Activated CD4-positive, alpha-beta memory T cell treated with anti-CD3 and anti-CD28 coated beads for 36 hours (primary cell): ENCODE measurements at regions of chr11 and their contacts with region 1.

Region 1: DNA sequence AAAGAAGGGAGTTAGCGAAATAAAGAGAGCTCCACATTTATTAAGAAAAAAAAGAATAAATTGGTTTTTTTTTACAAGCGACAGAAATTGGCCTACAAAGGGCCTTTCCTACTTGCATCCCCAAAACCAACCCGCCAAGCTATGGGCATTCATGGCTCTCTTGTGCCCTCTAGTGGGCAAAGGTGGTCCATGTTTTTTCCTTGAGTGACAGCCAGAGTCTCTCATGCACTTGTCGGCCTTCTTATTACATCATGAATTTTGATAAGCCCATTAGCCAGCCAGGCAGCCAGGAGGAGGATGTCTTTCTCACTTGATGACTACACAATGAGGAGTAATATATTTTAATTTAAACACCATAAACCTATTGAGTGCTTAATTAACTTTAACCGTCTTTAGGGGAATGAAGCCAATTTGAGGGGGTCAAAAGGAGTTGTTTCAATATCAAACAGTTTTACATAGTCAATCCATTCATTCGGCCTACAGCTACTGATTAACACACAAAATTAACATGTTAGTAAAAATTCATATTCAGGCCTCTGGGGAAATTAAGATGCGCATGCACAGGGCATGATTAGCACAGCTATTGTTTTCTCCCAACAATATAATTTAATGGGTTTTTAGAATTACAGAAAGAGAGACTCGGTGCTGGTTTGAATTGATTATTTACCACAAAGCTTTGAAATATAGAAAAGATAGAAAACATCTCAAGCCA is 85.5 kb downstream of the RCN1 start:
- DNase-seq: peak; percentile 84
- H3K4me3 Mint-ChIP-seq: no peak overlapping the region
- H3K27ac Mint-ChIP-seq: no peak overlapping the region
- H3K4me1 Mint-ChIP-seq: peaks cover 4% of the 10 kb centered on the region
- H3K27me3 Mint-ChIP-seq: peaks cover 8% of the 10 kb centered on the region

Region 2: GRCh38 chr11:31107062-31107461 is 1069.3 kb before region 1 on chr11:
- CTCF ChIA-PET with region 1: interaction called, 5 read pairs
- POLR2A ChIA-PET with region 1: no interaction called
- intact Hi-C with region 1: loop called (anchors 1 kb)
- DNase-seq: peak; percentile 66
- H3K4me3 Mint-ChIP-seq: no peak overlapping the region
- H3K27ac Mint-ChIP-seq: no peak overlapping the region
- H3K4me1 Mint-ChIP-seq: no peaks in the 10 kb centered on the region
- H3K27me3 Mint-ChIP-seq: no peaks in the 10 kb centered on the region

Region 3: DNA sequence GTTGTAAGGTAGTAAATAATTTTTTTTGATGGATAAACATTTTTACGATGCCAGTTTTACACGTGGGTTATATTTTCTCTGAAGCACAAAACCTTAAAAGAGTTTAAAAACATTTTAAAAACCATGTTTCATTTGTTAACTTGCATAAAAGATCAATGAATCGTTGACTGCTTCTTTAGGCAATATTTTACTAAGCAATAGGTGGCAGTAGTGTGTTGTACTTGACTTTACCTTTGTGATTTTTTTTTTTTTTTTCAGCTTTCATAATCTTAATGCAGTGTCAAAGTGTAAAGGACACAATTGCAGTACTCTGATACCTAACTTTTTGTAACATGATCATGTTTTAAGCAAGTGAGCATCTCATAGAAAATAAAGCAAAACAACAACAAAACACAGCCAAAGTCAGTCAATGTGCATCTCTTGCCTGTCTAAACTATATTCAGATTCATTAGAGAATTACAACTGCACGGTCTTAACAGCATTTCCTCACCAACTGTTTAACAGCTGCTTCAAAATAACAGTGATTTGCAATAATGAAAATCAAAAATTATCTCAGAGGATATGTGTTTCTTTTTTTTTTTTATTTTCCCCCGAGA is 779.0 kb before region 1 on chr11:
- CTCF ChIA-PET with region 1: interaction called, 4 read pairs
- POLR2A ChIA-PET with region 1: no interaction called
- intact Hi-C with region 1: loop called (anchors 5 kb)
- DNase-seq: no peak
- H3K4me3 Mint-ChIP-seq: no peak overlapping the region
- H3K27ac Mint-ChIP-seq: no peak overlapping the region
- H3K4me1 Mint-ChIP-seq: no peaks in the 10 kb centered on the region
- H3K27me3 Mint-ChIP-seq: no peaks in the 10 kb centered on the region

Region 4: DNA sequence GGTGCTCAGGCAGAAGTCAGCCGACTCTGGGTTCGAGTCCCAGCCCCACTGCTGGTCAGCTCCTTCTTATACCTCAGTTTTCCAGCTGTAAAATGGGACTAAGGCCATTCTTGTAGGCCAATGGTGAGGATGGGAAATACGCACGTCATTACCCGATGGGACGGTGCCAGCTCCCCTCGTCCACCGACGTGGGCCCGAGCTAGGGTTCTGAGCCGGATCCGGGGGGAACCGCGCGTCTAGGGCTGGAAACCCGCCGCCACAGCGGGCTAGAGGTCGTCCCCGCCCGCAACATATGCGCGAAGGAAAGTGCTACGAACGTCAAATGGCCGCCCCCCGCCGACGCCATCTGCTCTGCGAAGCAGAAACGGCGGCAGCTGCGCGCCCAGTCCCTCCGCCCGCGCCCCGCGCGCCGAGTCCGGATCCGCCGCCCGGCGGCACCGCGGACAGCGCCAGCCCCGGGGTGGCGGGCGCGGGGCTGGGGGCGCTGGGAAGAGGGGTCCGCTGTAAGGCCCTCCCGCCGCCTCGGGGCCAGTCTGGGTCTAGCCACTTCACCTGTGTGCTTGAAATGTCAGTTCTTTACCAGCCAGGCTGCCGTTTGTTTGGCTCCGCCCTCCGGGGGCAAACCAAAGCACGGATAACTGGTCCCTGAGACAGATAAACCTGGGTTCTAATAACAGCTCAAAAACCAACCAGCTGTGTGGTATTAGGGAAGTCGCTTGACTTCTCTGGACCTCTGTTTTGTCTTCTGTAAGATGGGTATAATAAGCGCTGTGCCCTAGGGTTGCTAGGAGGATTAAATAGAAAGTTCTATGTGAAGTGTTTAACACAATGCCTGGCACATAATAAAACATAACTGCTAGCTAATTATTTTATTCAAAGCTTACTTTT is 189.0 kb before region 1 on chr11:
- CTCF ChIA-PET with region 1: no interaction called
- POLR2A ChIA-PET with region 1: no interaction called
- intact Hi-C with region 1: no loop called
- DNase-seq: no peak
- H3K4me3 Mint-ChIP-seq: no peak overlapping the region
- H3K27ac Mint-ChIP-seq: no peak overlapping the region
- H3K4me1 Mint-ChIP-seq: no peaks in the 10 kb centered on the region
- H3K27me3 Mint-ChIP-seq: peaks cover 24% of the 10 kb centered on the region

Region 5: GRCh38 chr11:32052218-32052617 is 124.2 kb before region 1 on chr11:
- CTCF ChIA-PET with region 1: interaction called, 303 read pairs
- POLR2A ChIA-PET with region 1: no interaction called
- intact Hi-C with region 1: loop called (anchors 1 kb)
- DNase-seq: peak; percentile 60
- H3K4me3 Mint-ChIP-seq: no peak overlapping the region
- H3K27ac Mint-ChIP-seq: no peak overlapping the region
- H3K4me1 Mint-ChIP-seq: no peaks in the 10 kb centered on the region
- H3K27me3 Mint-ChIP-seq: peaks cover 34% of the 10 kb centered on the region

Region 6: DNA sequence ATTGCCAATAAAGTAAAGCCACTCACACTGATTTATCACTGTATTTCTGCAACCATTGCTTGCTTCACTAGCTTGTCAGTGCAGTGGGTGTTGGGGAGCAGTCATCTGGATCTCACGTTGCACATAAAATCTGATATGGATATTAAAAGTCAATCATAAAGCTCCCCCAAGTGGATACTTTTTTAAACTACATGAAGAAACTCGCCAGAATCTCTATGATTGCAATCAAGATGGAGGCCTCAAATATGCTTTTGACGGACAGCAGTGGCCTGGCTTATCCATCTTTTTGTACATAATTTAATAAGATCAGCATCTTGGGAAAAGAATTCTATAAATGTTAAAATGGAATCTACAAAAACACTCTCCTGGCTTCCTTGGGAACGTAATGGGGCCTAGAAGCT is 121.2 kb after region 1 on chr11:
- CTCF ChIA-PET with region 1: interaction called, 9 read pairs
- POLR2A ChIA-PET with region 1: no interaction called
- intact Hi-C with region 1: loop called (anchors 5 kb)
- DNase-seq: no peak
- H3K4me3 Mint-ChIP-seq: no peak overlapping the region
- H3K27ac Mint-ChIP-seq: no peak overlapping the region
- H3K4me1 Mint-ChIP-seq: no peaks in the 10 kb centered on the region
- H3K27me3 Mint-ChIP-seq: no peaks in the 10 kb centered on the region